ENCODE measurements at regions of chr6 and their contacts with region 1.

Region 1: DNA sequence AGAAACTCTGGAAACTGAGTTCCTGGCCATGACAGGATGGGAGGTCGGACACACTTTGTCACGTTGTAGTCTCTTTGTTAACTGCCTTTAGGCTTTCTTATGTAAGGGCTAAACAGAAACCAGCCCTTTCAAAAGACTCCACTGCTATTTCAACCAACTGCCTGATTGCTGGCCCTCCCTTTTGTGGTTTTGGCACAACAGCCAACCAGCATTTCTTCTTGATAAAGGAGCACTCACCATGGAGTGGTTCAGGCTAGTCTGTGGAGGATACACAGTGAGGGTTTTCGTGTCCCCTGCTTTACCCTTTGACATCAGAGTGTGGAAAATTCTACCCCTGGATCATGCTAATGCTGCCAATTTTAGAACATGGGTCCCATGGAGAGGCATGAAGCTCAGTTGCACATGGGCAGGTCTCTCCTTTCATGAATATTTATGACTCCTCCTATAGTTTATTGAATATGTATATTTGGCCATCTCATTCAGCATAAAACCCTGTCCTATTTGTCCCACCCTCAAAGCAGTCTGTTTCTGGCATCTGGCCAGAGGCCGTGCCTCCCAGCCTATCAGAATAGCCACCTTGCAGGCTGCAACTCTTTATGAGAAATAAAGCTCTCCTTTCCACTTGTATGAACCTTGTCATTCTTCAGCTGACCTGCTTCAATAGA is 148.3 kb downstream of the HS3ST5 start:
- DNase-seq: no peak
- H3K4me3 Mint-ChIP-seq: no peak overlapping the region
- H3K27ac Mint-ChIP-seq: no peak overlapping the region
- H3K4me1 Mint-ChIP-seq: no peaks in the 10 kb centered on the region
- H3K27me3 Mint-ChIP-seq: no peaks in the 10 kb centered on the region
- CTCF ChIP-seq: no peak

Region 2: GRCh38 chr6:112939563-112939962 is 1254.9 kb before region 1 on chr6:
- CTCF ChIA-PET with region 1: no interaction called
- intact Hi-C with region 1: loop called (anchors 10 kb)
- DNase-seq: no peak
- H3K4me3 Mint-ChIP-seq: no peak overlapping the region
- H3K27ac Mint-ChIP-seq: no peak overlapping the region
- H3K4me1 Mint-ChIP-seq: no peaks in the 10 kb centered on the region
- H3K27me3 Mint-ChIP-seq: no peaks in the 10 kb centered on the region
- CTCF ChIP-seq: no peak

Region 3: DNA sequence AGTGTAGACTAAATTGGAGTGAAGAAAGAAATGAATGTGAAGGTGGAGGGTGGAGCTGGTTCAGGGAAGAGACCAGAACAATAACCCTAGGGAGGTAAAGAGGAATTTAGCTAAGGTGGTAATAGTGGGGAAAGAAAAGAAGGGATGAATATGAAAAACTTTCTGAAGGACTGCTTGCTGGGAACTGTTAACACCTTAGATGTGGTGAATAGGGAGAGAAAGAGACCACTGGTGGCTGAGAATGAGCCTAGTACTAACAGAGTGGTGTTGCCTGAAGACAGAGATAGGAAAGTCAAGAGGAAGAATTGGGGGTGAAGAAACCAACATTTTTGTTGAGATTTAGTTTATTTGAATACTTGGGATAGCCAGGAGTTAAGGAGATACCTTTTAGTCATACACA is 226.7 kb after region 1 on chr6:
- CTCF ChIA-PET with region 1: no interaction called
- intact Hi-C with region 1: no loop called
- DNase-seq: no peak
- H3K4me3 Mint-ChIP-seq: no peak overlapping the region
- H3K27ac Mint-ChIP-seq: no peak overlapping the region
- H3K4me1 Mint-ChIP-seq: no peaks in the 10 kb centered on the region
- H3K27me3 Mint-ChIP-seq: no peaks in the 10 kb centered on the region
- CTCF ChIP-seq: no peak